ENCODE measurements at regions of chr7 and their contacts with region 1.

Region 1: DNA sequence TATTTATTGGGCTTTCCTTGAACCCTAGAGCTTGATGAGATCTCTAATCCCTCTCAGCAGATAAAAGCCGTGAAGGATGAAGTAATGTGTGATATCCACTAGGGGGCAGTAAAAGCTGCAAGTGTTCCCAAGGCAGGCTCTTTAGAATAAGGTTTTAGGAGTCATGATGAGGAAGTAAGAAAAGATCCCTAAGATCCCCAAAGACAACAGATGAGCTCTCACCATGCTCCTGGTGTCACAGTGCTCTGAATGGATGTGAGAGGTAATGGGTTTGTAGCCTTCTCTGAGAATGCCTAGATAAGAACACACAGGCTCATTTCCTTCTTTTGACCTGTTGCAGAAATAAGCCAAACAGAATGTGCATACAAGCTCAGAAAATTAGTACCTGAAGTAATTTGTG is 70.4 kb upstream of the ITPRID1 start:
- DNase-seq: no peak
- H3K4me3 ChIP-seq: no peak overlapping the region
- H3K27ac ChIP-seq: no peak overlapping the region
- H3K4me1 ChIP-seq: peaks cover 0 to 3% (median 0%) of the 10 kb centered on the region in 4 experiments; a peak in 1 of 7 replicates
- H3K27me3 ChIP-seq: peaks cover 0 to 2% (median under 1%) of the 10 kb centered on the region in 4 experiments; a peak in 1 of 7 replicates
- CTCF ChIP-seq: peak in 2 of 3 experiments; percentile 74 to 78; a peak in 3 of 4 replicates
- EP300 ChIP-seq: no peak
- POLR2A ChIP-seq: no peak
- RAD21 ChIP-seq: peak; percentile 92 to 97

Region 2: GRCh38 chr7:31192986-31193385 is 250.5 kb before region 1 on chr7:
- CTCF ChIA-PET with region 1: interaction called, 14 read pairs
- POLR2A ChIA-PET with region 1: no interaction called
- DNase-seq: peak; percentile 76 to 84
- H3K4me3 ChIP-seq: no peak overlapping the region
- H3K27ac ChIP-seq: no peak overlapping the region
- H3K4me1 ChIP-seq: no peaks in the 10 kb centered on the region
- H3K27me3 ChIP-seq: no peaks in the 10 kb centered on the region; a peak in 1 of 7 replicates
- CTCF ChIP-seq: peak; percentile 90 to 95 (median 90)
- EP300 ChIP-seq: no peak
- POLR2A ChIP-seq: no peak
- RAD21 ChIP-seq: peak; percentile 96 to 98

Region 3: GRCh38 chr7:31373337-31374289 is 69.8 kb before region 1 on chr7:
- CTCF ChIA-PET with region 1: interaction called, 15 read pairs
- POLR2A ChIA-PET with region 1: no interaction called
- DNase-seq: peak; percentile 56 to 76
- H3K4me3 ChIP-seq: no peak overlapping the region
- H3K27ac ChIP-seq: no peak overlapping the region
- H3K4me1 ChIP-seq: peaks cover 0 to 3% (median 0%) of the 10 kb centered on the region in 4 experiments; a peak in 2 of 7 replicates
- H3K27me3 ChIP-seq: peaks cover 0 to 9% (median 2%) of the 10 kb centered on the region in 4 experiments; a peak in 4 of 7 replicates
- CTCF ChIP-seq: peak; percentile 56 to 88 (median 85)
- EP300 ChIP-seq: no peak
- POLR2A ChIP-seq: no peak
- RAD21 ChIP-seq: peak; percentile 90 to 95

Region 4: GRCh38 chr7:31432836-31433340 is 10.6 kb before region 1 on chr7:
- CTCF ChIA-PET with region 1: interaction called, 10 read pairs
- POLR2A ChIA-PET with region 1: no interaction called
- DNase-seq: no peak
- H3K4me3 ChIP-seq: no peak overlapping the region
- H3K27ac ChIP-seq: no peak overlapping the region
- H3K4me1 ChIP-seq: no peaks in the 10 kb centered on the region
- H3K27me3 ChIP-seq: no peaks in the 10 kb centered on the region
- CTCF ChIP-seq: no peak
- EP300 ChIP-seq: no peak
- POLR2A ChIP-seq: no peak
- RAD21 ChIP-seq: no peak

Region 5: DNA sequence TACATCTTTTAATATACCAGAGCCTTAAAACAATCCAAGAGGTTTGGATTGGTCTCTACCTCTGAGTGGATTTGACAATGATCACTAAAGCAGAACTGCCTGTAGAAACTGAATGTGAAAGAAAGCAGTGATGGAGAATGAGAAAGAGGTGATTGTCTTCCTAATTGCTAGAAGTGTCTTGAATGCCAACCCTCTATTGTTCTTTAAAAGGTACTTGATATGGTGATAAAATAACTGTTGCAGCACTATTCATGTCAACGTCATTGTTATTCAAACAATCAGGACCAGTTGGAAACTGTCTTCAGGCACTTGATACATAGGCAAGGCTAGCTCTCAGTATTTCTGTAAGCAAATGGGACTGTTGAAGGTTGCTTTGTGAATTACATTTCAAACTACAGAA is 22.6 kb after region 1 on chr7:
- CTCF ChIA-PET with region 1: interaction called, 33 read pairs
- POLR2A ChIA-PET with region 1: no interaction called
- DNase-seq: peak in 1 of 2 experiments; percentile 57
- H3K4me3 ChIP-seq: peak overlapping the region in 1 of 4 experiments; percentile 40; a peak in 1 of 8 replicates
- H3K27ac ChIP-seq: no peak overlapping the region
- H3K4me1 ChIP-seq: peaks cover 0 to 14% (median 7%) of the 10 kb centered on the region in 4 experiments; a peak in 5 of 7 replicates
- H3K27me3 ChIP-seq: peaks cover 0 to 9% (median 1%) of the 10 kb centered on the region in 4 experiments; a peak in 4 of 7 replicates
- CTCF ChIP-seq: no peak
- EP300 ChIP-seq: peak; percentile 29 to 98
- POLR2A ChIP-seq: no peak
- RAD21 ChIP-seq: no peak

Region 6: DNA sequence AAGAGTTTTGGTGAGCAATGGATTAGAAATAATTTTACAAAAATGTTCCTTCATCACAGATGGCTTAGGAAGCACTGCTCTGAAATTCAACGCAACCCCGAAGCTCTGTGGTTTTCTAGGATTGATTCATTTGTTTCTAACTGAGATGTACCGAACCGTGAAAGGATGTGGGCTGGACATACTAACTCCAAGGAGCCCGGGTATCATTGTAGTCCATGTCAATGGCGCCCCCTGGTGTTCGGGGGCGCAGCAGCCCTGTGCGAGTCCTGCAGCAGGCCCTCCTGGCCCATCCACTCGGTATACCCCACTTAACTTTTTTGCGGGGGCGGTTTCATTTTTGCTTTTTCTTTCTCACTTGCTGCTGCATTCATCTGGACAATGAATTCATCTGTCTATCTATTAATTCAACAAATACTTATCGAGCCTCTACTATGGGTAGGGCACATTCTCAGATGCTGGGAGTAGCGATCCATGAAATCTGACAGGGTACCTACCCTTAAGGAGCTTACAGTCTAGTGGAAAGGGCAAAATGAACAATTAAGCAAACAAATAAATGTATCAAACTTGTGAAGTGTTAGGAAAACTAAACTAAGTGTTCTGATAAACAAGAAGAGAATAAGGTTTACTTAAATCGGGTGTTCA is 45.2 kb after region 1 on chr7:
- CTCF ChIA-PET with region 1: interaction called, 94 read pairs
- POLR2A ChIA-PET with region 1: no interaction called
- DNase-seq: peak; percentile 69 to 90
- H3K4me3 ChIP-seq: no peak overlapping the region
- H3K27ac ChIP-seq: no peak overlapping the region
- H3K4me1 ChIP-seq: peaks cover 0 to 5% (median 3%) of the 10 kb centered on the region in 4 experiments; a peak in 3 of 7 replicates
- H3K27me3 ChIP-seq: no peaks in the 10 kb centered on the region
- CTCF ChIP-seq: peak; percentile 84 to 92 (median 90)
- EP300 ChIP-seq: no peak
- POLR2A ChIP-seq: no peak
- RAD21 ChIP-seq: peak; percentile 91 to 96